Heart right ventricle (tissue), 16 donors: ENCODE measurements at regions of chr6 and their contacts with region 1.

Region 1: DNA sequence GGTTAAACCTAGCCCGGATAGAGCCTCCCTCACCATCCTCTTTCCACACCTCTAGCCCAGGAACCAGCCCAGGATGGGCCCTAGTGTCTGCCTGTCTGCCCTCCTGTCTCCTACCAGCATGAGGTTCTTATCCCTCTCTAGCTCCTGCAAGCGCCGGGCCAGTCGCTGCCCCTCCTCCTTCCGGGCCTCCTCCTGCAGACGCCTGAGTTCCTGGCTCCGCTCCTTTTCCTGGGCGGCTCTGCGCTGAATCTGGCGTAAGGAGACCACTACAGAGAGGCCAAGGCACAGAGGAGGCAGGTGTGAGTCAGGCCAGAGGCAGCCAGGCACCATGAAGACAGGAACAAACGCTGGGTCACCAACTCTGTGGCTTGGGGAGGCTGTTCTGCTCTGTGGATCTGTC is 4.3 kb upstream of the PSORS1C2 start:
- DNase-seq: peak; percentile 68 to 72
- ATAC-seq: peak; percentile 55 to 92 (median 87)
- H3K4me3 ChIP-seq: peak overlapping the region in 1 of 10 donors; percentile 2
- H3K27ac ChIP-seq: peak overlapping the region in 7 of 10 donors; percentile 15 to 76 (median 65)
- H3K4me1 ChIP-seq: peaks cover 9 to 40% (median 25%) of the 10 kb centered on the region in 9 donors
- H3K27me3 ChIP-seq: no peaks in the 10 kb centered on the region
- CTCF ChIP-seq: no peak

Region 2: GRCh38 chr6:30883685-30884520 is 259.2 kb before region 1 on chr6 and contains the start of gene DDR1:
- intact Hi-C with region 1: no loop called
- DNase-seq: peak; percentile 73 to 76
- ATAC-seq: peak; percentile 63 to 89 (median 73)
- H3K4me3 ChIP-seq: peak within 1 kb of the TSS; percentile 53 to 96 (median 74)
- H3K27ac ChIP-seq: peak within 1 kb of the TSS; percentile 43 to 90 (median 84)
- H3K4me1 ChIP-seq: peaks cover 13 to 58% (median 36%) of the 10 kb centered on the region in 9 donors
- H3K27me3 ChIP-seq: peaks cover 0 to 22% (median 0%) of the 10 kb centered on the region in 7 donors
- CTCF ChIP-seq: no peak
- total RNA-seq, gene DDR1: 15.5 to 49.2 (median 26.9) TPM

Region 3: GRCh38 chr6:31175971-31176370 is 32.8 kb after region 1 on chr6:
- intact Hi-C with region 1: loop called in 1 of 10 experiments (anchors 5 kb)
- DNase-seq: no peak
- ATAC-seq: peak in 1 of 8 donors; percentile 42
- H3K4me3 ChIP-seq: no peak overlapping the region
- H3K27ac ChIP-seq: peak overlapping the region in 2 of 10 donors; percentile 19 to 47
- H3K4me1 ChIP-seq: peaks cover 0 to 51% (median 8%) of the 10 kb centered on the region in 9 donors
- H3K27me3 ChIP-seq: no peaks in the 10 kb centered on the region
- CTCF ChIP-seq: no peak

Region 4: DNA sequence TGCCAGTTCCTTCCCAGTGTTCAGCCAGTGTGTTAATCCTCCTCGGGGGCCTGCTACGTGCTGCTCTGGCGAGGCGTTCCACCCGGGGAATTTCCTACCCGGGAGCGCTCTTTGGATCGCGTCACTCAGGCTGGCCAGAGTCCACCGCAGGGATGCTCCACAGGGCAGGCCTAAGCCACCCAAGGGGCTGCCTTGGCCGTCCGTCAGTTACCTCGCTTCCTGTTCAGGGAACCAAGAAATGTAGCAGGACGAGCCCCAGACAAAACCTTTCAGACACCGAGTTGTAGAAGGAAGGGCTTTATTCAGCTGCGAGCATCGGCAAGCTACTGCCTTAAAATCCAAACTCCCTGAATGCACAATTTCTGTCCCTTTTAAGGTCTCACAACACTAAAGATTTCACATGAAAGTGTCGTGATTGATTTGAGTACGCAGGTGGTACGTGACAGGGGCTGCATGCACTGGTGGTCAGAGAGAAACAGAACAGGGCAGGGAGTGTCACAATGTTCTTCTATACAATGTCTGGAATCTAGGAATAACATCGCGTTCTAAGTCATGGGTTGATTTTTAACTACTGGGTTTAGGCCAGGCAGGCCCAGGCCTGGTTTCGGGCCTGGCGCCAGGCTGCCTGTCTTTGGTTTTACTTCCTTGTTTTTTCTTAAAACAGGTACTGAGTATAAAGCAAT is 43.0 kb after region 1 on chr6:
- intact Hi-C with region 1: loop called in 5 of 10 experiments (anchors 2 to 5 kb)
- DNase-seq: peak; percentile 83 to 85
- ATAC-seq: peak; percentile 58 to 86 (median 74)
- H3K4me3 ChIP-seq: peak overlapping the region; percentile 23 to 57 (median 39)
- H3K27ac ChIP-seq: peak overlapping the region; percentile 44 to 91 (median 82)
- H3K4me1 ChIP-seq: peaks cover 0 to 26% (median 2%) of the 10 kb centered on the region in 9 donors
- H3K27me3 ChIP-seq: no peaks in the 10 kb centered on the region
- CTCF ChIP-seq: no peak

Region 5: GRCh38 chr6:31366693-31367470 is 223.7 kb after region 1 on chr6:
- intact Hi-C with region 1: loop called in 3 of 10 experiments (anchors 5 kb)
- DNase-seq: peak; percentile 82 to 90
- ATAC-seq: peak; percentile 98 to 100 (median 100)
- H3K4me3 ChIP-seq: peak overlapping the region in 8 of 10 donors; percentile 12 to 51 (median 42)
- H3K27ac ChIP-seq: no peak overlapping the region
- H3K4me1 ChIP-seq: peaks cover 0 to 9% (median 0%) of the 10 kb centered on the region in 9 donors
- H3K27me3 ChIP-seq: peaks cover 0 to 34% (median 14%) of the 10 kb centered on the region in 7 donors
- CTCF ChIP-seq: peak; percentile 88 to 97 (median 94)